Prostate gland (tissue), 2 donors: ENCODE measurements at regions of chr1 and their contacts with region 1.

Region 1: DNA sequence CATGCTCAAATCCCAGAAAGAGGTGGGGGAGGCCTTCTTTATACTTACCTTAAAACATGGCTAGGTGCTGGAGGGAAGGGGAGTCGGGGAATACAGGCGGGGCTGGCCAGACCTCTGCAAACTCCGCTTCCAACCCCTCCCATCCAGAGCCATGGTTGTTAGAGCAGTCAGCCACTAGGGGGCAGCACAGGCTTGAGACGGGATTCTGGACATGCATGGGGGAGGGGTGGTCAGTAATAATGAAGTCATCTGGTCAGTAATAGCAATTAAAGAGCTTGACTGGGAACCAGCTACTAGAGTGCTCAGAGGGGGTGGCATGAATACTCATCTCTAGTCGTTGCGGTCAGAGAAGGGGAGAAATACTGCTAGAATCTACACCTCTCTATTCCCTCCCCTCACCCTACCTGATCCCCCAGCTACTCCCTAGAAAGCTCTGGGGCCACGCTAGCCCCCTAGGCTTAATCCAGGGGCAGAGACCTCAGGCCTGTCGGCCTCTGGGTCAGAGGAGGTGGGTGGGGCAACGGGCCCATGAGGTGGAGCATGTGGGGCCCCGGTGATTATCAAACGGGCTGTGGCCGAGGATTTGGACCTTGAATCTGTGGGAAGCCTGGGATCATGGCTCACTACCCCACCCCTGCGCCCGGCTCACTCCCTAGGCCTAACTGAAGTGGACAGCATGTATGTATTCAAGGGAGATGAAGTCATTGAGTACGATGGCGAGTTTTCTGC is 2.9 kb downstream of the CASQ1 start:
- DNase-seq: peak; percentile 80
- H3K4me3 ChIP-seq: no peak overlapping the region
- H3K27ac ChIP-seq: no peak overlapping the region
- H3K4me1 ChIP-seq: peaks cover 3% of the 10 kb centered on the region
- H3K27me3 ChIP-seq: no peaks in the 10 kb centered on the region
- CTCF ChIP-seq: peak; percentile 93 to 99 (median 97)
- POLR2A ChIP-seq: no peak

Region 2: DNA sequence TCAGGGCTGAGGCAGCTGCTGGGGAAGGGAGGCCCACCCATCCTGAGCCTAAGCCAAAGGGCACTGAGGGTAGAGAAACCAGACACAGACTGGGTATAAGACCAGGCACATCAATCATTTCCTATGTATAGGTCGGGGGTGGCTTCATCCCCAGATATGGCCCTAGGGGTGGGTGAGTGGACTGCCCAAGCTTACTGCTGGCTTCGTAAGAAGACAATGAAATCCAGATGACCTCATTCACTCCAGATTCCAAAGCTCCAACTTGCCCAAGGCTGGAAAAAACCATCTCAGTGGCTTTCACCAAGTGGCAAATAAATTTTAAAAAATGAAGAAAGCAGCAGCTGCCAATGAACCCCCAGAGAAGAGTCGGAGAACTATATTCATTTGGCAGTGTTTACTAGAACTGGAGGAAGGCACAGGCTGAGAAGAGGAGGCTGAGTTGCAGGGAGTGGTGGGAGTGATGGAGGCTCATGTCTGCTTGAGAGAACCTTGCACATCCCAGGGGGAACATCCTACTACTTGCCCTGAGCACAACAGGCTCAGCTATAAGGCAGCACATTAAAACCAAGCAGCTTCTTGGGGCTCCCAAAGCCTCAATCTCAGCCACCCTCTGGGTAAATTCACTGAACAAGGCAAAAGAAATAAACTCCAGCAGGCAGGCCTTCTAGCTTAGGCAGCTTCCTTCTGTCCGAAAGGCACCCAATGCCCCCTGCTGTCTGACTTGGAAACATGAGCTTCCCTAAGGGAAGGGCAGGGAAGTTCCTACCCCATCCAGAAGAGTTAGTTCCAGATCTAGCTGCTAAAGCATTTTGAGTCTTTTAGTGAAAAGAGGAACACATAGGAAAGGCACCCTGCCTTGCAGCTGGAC is 26.0 kb after region 1 on chr1:
- intact Hi-C with region 1: loop called (anchors 1 kb)
- DNase-seq: peak; percentile 39
- H3K4me3 ChIP-seq: no peak overlapping the region
- H3K27ac ChIP-seq: peak overlapping the region; percentile 8 to 47
- H3K4me1 ChIP-seq: no peaks in the 10 kb centered on the region
- H3K27me3 ChIP-seq: no peaks in the 10 kb centered on the region
- CTCF ChIP-seq: peak in 3 of 4 experiments; percentile 39 to 77 (median 60)
- POLR2A ChIP-seq: no peak

Region 3: DNA sequence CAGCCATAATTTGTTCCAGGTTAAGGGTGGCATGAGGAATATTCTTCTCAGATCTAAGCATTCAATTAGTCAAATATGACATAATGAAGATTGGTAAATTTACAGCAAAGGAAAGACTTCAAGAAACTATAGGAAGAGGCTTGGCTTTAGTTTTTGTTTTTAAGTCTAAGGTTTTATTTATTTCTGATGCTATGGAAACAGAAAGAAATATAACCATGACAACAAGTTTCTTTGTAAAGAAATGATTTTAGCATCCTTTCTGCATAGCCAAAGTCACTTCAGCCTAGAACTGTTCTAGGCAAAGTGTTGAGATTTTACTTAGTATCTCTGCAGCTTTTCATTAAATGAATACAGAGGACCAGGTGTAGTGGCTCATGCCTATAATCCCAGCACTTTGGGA is 39.7 kb after region 1 on chr1:
- intact Hi-C with region 1: no loop called
- DNase-seq: no peak
- H3K4me3 ChIP-seq: no peak overlapping the region
- H3K27ac ChIP-seq: no peak overlapping the region
- H3K4me1 ChIP-seq: no peaks in the 10 kb centered on the region
- H3K27me3 ChIP-seq: no peaks in the 10 kb centered on the region
- CTCF ChIP-seq: no peak
- POLR2A ChIP-seq: no peak

Region 4: GRCh38 chr1:160251687-160252526 is 58.7 kb after region 1 on chr1:
- intact Hi-C with region 1: loop called (anchors 5 kb)
- DNase-seq: peak; percentile 72
- H3K4me3 ChIP-seq: no peak overlapping the region
- H3K27ac ChIP-seq: no peak overlapping the region
- H3K4me1 ChIP-seq: no peaks in the 10 kb centered on the region
- H3K27me3 ChIP-seq: no peaks in the 10 kb centered on the region
- CTCF ChIP-seq: peak; percentile 25 to 85 (median 78)
- POLR2A ChIP-seq: no peak

Region 5: DNA sequence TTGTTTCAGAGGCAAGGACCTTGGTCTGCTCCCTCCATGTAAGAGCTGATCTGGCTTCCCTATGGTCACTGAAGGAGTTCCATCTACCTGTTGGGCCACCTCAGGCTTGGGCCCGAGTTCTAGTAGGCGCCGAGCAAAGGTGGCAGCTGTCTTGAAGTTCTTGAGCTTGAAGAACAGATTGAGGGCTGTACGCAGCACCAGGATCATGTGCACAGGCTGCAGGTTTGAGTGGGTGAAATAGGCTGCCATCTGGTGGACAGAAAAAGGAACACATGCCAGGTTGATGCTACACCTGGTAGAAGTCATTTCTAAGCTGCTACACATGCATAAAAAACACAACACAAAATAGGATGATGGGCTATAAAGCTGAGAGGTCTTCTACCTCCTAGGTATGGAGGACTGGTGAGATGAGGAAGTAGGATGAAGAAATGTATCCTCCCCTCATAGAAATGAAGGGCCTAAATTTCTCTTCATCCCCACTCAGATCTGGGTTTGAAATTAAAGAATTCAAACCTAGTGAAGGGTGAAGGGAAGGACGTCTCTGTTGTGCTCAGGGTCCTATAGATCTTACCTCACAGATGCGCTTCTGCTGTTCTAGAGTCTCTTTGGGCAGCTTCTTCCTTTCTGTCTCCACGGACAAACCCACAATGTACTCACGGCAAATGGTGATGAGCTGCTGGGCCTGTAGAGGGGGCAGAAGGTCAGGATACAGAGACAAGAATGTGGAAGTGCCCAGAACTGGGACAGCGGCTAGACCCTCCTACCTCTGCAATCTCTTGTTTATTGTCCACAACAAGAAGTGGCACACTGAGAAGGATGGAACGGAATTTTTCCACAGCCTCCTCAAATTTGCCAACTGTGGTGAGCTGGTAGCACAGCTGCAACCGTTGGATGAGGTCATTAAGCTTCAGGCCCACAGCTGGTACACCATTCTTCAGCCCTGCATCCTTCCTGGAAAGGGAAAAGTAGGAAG is 98.3 kb after region 1 on chr1:
- intact Hi-C with region 1: loop called (anchors 2 kb)
- DNase-seq: peak; percentile 67
- H3K4me3 ChIP-seq: no peak overlapping the region
- H3K27ac ChIP-seq: no peak overlapping the region
- H3K4me1 ChIP-seq: no peaks in the 10 kb centered on the region
- H3K27me3 ChIP-seq: no peaks in the 10 kb centered on the region
- CTCF ChIP-seq: peak; percentile 76 to 85 (median 80)
- POLR2A ChIP-seq: no peak